Activated CD8-positive, alpha-beta T cell treated with anti-CD3 and anti-CD28 coated beads for 36 hours (primary cell): ENCODE measurements at regions of chr10 and their contacts with region 1.

Region 1: DNA sequence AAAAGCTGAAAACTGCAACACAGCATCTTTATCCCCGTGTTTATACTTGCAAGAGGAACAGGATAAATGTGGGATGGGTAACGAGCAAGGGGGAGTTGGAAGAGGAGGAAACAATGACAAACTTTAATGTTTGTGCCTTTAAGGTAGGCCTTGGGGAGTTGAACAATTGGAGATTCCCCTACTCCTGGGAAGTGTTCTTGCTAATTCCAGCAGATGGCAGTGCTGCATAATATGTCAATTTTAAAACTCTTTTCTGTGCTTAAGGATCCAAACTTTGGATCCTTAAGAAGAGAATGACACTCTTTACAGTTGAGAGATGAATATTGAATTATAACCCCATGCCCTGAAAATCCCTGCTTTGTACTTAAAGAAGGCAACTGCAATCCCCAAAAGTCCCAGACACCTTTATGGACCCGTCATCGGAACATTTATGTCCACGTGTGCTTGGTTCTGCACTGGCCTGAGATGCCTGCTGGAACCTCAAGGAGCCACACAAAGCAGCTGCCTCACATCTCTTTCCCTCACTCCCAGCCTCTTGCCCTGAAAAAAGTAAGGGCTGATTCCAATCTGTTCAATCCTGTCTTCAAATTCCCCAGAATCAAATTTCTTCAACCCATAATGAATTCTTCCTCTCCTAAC is 12.0 kb downstream of the IFIT5 start:
- DNase-seq: peak; percentile 16
- ATAC-seq: peak; percentile 74
- H3K4me3 Mint-ChIP-seq: no peak overlapping the region
- H3K27ac Mint-ChIP-seq: no peak overlapping the region
- H3K4me1 Mint-ChIP-seq: peaks cover under 1% of the 10 kb centered on the region
- H3K27me3 Mint-ChIP-seq: peaks cover 3% of the 10 kb centered on the region
- CTCF ChIP-seq: peak; percentile 84

Region 2: GRCh38 chr10:89342206-89342958 is 84.0 kb before region 1 on chr10:
- CTCF ChIA-PET with region 1: no interaction called
- POLR2A ChIA-PET with region 1: no interaction called
- intact Hi-C with region 1: no loop called
- DNase-seq: no peak
- ATAC-seq: no peak
- H3K4me3 Mint-ChIP-seq: no peak overlapping the region
- H3K27ac Mint-ChIP-seq: no peak overlapping the region
- H3K4me1 Mint-ChIP-seq: peaks cover 6% of the 10 kb centered on the region
- H3K27me3 Mint-ChIP-seq: peaks cover 28% of the 10 kb centered on the region
- CTCF ChIP-seq: no peak

Region 3: GRCh38 chr10:89548673-89549072 is 122.3 kb after region 1 on chr10:
- CTCF ChIA-PET with region 1: no interaction called
- POLR2A ChIA-PET with region 1: no interaction called
- intact Hi-C with region 1: loop called (anchors 5 kb)
- DNase-seq: no peak
- ATAC-seq: no peak
- H3K4me3 Mint-ChIP-seq: no peak overlapping the region
- H3K27ac Mint-ChIP-seq: no peak overlapping the region
- H3K4me1 Mint-ChIP-seq: no peaks in the 10 kb centered on the region
- H3K27me3 Mint-ChIP-seq: peaks cover 3% of the 10 kb centered on the region
- CTCF ChIP-seq: no peak

Region 4: DNA sequence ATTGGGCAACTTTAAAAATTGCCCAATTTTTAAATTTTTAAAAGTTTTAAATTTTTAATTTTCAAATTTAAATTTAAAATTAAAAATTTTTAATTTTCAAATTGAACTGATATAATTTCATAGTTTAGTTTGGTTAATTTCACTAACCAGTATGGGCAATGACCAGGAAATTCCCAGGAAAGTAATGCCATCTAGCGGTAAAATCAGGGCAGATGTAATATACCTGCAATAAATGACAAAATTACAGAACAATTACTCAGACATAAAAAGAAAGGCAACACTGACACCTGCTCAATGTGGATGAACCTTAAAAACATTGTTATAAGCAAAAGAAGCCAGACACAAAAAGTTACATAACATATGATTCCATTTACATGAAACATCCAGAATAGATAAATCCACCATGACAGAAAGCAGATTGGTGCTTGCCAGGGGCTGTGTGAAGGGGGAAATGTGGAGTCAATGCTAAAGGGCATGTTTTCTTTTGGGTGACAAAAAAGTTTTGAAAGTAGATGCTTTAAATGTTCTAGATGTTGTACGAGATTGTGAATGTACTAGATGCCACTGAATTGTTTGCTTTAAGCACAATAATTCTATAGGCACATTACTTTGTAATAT is 137.6 kb after region 1 on chr10:
- CTCF ChIA-PET with region 1: interaction called, 4 read pairs
- POLR2A ChIA-PET with region 1: interaction called, 4 read pairs
- intact Hi-C with region 1: loop called (anchors 2 kb)
- DNase-seq: peak; percentile 28
- ATAC-seq: peak; percentile 45
- H3K4me3 Mint-ChIP-seq: no peak overlapping the region
- H3K27ac Mint-ChIP-seq: no peak overlapping the region
- H3K4me1 Mint-ChIP-seq: no peaks in the 10 kb centered on the region
- H3K27me3 Mint-ChIP-seq: peaks cover 11% of the 10 kb centered on the region
- CTCF ChIP-seq: peak; percentile 70